ENCODE measurements at regions of chr3 and their contacts with region 1.

Region 1: GRCh38 chr3:50926868-50927267 is 252.1 kb downstream of the DOCK3 start:
- DNase-seq: peak; percentile 15 to 70
- H3K4me3 ChIP-seq: no peak overlapping the region
- H3K27ac ChIP-seq: peak overlapping the region; percentile 61
- H3K4me1 ChIP-seq: peaks cover 36% of the 10 kb centered on the region
- H3K27me3 ChIP-seq: no peaks in the 10 kb centered on the region
- CTCF ChIP-seq: no peak

Region 2: GRCh38 chr3:50807266-50807665 is 119.6 kb before region 1 on chr3:
- CTCF ChIA-PET with region 1: no interaction called
- POLR2A ChIA-PET with region 1: no interaction called
- intact Hi-C with region 1: loop called (anchors 5 kb)
- DNase-seq: peak; percentile 82 to 86
- H3K4me3 ChIP-seq: peak overlapping the region; percentile 37; the same call in 1 of the 2 replicates
- H3K27ac ChIP-seq: peak overlapping the region; percentile 96
- H3K4me1 ChIP-seq: peaks cover 44% of the 10 kb centered on the region
- H3K27me3 ChIP-seq: no peaks in the 10 kb centered on the region
- CTCF ChIP-seq: no peak

Measured in PC-9 (cell line).